GM23248 (cell line): ENCODE measurements at regions of chr15 and their contacts with region 1.

Region 1: DNA sequence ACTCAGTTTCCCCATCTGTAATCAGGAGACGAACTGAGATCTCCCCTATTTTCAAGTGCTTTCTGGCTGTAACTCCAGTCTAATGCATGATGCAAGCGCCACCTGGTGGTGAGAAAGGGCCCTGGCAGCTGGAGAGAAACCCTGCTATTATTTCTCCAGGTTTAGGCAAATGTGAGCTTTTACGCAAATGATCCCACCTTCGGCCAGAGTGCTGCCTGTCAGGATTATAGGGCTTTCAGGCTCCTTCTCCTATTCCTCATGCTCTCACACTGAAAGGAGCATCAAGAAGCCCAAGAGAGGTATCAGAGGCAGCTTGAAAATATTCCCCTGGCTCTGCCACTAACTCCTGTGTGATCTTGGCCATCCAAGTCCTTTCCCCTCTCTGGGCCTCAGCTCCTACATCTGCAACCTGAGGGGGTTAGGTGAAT is 93.9 kb upstream of the RASGRF1 start:
- DNase-seq: peak; percentile 69
- H3K4me3 ChIP-seq: no peak overlapping the region
- H3K27ac ChIP-seq: no peak overlapping the region
- H3K4me1 ChIP-seq: no peaks in the 10 kb centered on the region
- H3K27me3 ChIP-seq: peaks cover 8% of the 10 kb centered on the region; the same call in 1 of the 2 replicates

Region 2: DNA sequence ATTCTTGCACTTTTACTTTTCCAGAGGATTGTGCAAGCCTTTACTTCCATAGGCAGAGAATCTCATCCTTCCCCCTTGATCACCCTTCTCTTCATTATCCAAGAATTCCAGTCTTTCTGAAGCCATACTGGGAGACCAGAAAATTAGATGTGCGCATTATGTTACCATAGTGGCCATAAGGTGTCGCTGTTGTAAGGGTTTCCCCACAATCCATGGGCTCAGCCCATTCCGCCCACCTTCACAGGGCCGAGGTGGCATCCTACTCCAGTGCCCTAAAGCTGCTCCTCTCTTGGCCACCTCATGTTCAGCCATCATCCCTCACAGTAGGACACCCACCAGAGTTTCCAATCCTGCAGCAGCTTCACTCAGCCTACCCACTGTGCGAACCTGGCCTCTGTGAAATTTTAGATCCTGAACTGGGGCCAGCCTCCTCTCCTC is 274.7 kb before region 1 on chr15:
- in situ Hi-C with region 1: loop called (anchors 5 kb)
- DNase-seq: peak; percentile 69
- H3K4me3 ChIP-seq: no peak overlapping the region
- H3K27ac ChIP-seq: no peak overlapping the region
- H3K4me1 ChIP-seq: peaks cover 39% of the 10 kb centered on the region
- H3K27me3 ChIP-seq: no peaks in the 10 kb centered on the region

Region 3: DNA sequence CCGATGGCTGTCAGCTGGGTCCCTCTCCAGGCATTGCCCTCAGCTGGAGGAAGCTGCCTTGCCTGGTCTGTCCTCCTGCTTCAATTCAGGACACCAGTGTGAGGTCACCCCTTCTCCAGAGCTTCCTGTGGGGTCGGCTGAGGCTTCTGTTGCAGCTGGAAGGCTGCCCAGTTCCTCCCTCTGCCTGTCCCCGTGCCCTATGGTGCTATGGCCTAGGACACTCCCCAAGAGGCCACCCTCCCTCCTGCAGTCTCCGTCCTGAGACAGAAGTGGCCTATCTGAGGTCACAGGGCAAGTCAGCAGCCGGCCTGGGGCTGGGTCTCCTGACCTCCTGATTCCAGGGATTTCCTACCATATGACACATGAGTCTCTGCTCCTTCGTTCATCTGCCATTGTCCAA is 151.8 kb before region 1 on chr15:
- in situ Hi-C with region 1: loop called (anchors 5 kb)
- DNase-seq: no peak
- H3K4me3 ChIP-seq: no peak overlapping the region
- H3K27ac ChIP-seq: no peak overlapping the region
- H3K4me1 ChIP-seq: no peaks in the 10 kb centered on the region
- H3K27me3 ChIP-seq: peaks cover 31% of the 10 kb centered on the region

Region 4: DNA sequence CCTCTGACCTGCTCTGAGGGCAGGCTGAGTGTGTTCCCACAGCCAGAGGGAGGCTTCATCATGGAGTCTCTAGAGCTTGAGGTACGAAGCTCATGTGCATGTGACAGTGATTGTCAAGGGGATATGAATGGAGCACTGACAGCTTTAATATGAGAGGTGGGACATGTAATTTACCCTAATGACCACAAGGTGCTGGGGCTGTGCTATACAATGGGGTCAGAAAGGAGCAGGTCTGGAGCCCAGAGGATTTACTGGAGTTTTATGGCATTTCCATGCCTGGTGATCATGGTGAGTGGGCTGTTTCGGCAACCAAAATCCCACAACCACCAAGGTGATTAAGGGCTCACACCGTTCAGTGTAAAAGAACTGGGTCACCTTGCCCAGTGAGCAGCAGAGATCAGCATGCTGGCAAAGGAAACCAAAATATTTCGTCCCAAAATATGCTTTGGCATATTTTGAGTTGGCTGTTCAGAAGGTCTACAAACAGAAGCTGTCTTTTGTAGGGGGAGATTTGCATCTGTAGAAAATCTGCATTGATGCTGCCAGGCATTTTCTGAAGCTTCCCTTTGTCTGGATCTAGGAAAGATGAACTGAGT is 53.8 kb before region 1 on chr15:
- in situ Hi-C with region 1: no loop called
- DNase-seq: no peak
- H3K4me3 ChIP-seq: no peak overlapping the region
- H3K27ac ChIP-seq: no peak overlapping the region
- H3K4me1 ChIP-seq: no peaks in the 10 kb centered on the region
- H3K27me3 ChIP-seq: peaks cover 22% of the 10 kb centered on the region; the same call in 1 of the 2 replicates